Cardiac septum (tissue), 1 donor: ENCODE measurements at regions of chr13 and their contacts with region 1.

Region 1: DNA sequence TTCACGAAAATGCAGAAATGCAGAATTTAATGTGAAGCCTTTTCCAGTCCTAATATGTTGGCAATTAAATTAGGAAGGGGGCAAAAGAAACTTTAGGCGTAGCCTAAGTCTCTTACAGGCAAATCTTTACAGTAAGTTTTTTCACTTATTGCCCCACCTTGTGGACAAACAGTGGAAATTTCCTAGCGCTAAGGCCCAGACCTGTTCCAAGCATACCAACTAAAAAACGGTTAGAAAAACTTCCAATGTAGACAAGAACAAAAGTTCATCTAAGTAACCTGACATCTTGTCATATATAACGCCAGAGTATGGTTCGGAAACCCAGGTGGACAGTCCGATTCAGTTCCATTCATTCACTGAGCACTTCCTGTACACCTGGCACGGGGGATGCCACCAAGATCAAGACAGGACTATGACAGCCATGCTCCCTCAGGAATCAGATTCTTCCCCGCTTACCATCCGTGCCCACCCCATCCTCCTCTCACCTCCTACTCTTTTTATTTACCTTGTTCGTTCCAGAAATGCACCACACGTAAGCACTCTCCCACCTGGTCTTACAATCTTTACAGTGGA is 4.9 kb downstream of the ZAR1L start:
- DNase-seq: no peak

Region 2: GRCh38 chr13:31824705-31825517 is 485.3 kb before region 1 on chr13:
- intact Hi-C with region 1: loop called (anchors 5 kb)
- DNase-seq: no peak

Region 3: DNA sequence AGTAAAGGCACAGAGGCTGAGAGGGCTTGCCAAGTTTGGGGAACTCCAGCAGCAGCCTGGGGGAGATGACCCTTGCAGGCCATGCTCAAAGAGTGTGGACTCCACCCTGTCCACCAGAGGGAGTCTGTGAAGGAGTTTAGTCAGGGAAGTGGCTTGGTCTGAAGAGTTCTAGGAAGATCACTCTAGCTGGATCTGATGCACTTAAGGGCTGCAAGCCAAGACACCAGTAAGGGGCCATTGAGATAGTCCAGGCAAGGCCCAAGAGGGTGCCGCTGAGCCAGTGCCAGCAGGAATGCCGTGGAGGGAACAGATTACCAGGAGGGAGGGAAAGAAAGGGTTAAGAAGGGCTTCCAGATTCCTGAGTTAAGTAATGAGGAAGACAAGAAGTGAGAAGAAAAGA is 63.8 kb before region 1 on chr13:
- intact Hi-C with region 1: loop called (anchors 1 kb)
- DNase-seq: no peak

Region 4: DNA sequence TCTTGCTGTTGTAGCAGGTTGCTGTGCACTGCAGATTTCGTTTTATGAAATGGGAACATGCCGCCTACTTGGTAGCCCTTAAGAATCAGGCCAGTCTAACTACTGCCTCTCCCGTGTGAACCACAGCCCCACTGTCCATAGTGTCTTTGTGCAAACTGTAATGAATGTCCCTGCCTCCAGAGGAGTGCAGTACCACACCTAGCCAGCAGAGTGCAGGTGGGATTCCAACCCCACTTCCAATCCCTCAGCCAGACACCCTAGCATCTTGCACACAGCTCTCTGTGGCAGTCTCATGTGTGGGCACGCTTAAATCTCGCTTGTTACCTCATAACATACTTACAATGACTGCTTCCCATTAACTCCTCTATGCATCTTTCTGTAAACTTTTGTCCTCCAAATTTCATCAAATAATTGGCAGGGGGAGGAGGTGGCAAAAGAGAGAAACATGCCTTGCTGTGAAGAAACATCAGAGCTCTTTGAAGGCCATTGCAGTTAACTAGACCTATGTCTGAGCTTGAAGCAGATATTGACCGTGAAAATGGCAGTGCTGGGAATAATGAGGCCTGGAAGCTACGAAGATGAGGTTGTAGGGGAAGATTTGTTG is 42.3 kb before region 1 on chr13:
- intact Hi-C with region 1: no loop called
- DNase-seq: no peak